Ascending aorta (tissue), 2 donors: ENCODE measurements at regions of chr12 and their contacts with region 1.

Region 1: GRCh38 chr12:124518051-124518932 is 49.1 kb downstream of the NCOR2 start:
- DNase-seq: peak; percentile 94 to 100
- H3K4me3 ChIP-seq: peak overlapping the region; percentile 54 to 67
- H3K27ac ChIP-seq: peak overlapping the region; percentile 91 to 97
- H3K4me1 ChIP-seq: peaks cover 39 to 71% of the 10 kb centered on the region in 2 donors
- H3K27me3 ChIP-seq: no peaks in the 10 kb centered on the region
- CTCF ChIP-seq: no peak

Region 2: GRCh38 chr12:124466216-124467128 is 51.8 kb before region 1 on chr12:
- intact Hi-C with region 1: no loop called
- DNase-seq: peak; percentile 44 to 77
- H3K4me3 ChIP-seq: no peak overlapping the region
- H3K27ac ChIP-seq: no peak overlapping the region
- H3K4me1 ChIP-seq: no peaks in the 10 kb centered on the region
- H3K27me3 ChIP-seq: no peaks in the 10 kb centered on the region
- CTCF ChIP-seq: peak in 1 of 3 experiments; percentile 16

Region 3: GRCh38 chr12:124497658-124498057 is 20.6 kb before region 1 on chr12:
- intact Hi-C with region 1: loop called (anchors 2 kb)
- DNase-seq: peak in 1 of 2 donors; percentile 89
- H3K4me3 ChIP-seq: no peak overlapping the region
- H3K27ac ChIP-seq: peak overlapping the region; percentile 68 to 74
- H3K4me1 ChIP-seq: peaks cover 26 to 41% of the 10 kb centered on the region in 2 donors
- H3K27me3 ChIP-seq: no peaks in the 10 kb centered on the region
- CTCF ChIP-seq: no peak

Region 4: DNA sequence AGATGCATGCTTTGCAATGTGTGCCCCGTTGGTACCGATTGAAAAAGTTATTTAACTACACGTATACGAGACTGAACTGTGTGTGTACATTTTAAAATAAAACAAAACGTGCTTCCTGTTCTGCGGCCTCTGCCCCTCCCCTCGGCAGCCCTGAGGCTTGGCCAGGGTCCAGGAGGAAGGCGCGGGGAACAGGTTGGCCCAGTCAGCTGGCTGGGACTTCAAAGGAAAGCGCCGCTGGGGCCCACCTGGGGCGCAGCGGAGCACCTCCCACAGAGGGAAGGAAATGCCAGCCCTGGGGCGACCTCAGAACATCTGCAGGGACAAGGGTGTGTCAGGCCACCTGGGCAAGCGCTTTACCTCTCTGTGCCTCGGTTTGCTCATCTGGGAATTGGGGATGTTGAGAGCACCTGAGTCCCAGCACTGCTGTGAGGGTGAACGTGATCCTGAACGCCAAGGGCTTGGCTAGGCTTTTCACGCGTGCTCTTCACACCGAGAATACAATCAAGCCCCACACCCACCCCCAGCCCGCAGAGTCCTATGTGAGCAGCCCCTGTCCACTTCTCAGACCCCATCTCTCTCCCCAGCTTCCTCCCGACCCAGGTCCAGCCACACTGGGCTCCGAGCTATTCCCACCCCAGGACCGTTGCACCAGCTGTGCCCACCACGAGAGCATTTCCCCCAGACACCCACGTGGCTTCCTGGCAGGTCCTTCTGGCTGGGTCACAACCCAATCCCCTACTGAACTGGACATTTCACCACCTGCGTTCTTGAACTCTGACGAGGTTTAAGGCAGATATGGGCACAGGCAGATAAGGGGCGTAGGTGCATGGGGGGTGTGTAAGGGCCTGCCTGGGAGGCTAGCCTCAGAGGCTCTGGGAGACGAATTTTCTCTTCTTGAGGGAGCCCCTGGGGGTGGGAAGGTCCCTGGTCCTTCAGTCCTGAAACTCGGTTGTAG is 91.0 kb after region 1 on chr12:
- intact Hi-C with region 1: no loop called
- DNase-seq: peak in 1 of 2 donors; percentile 78
- H3K4me3 ChIP-seq: no peak overlapping the region
- H3K27ac ChIP-seq: no peak overlapping the region
- H3K4me1 ChIP-seq: peaks cover 0 to 6% of the 10 kb centered on the region in 2 donors
- H3K27me3 ChIP-seq: no peaks in the 10 kb centered on the region
- CTCF ChIP-seq: no peak

Region 5: DNA sequence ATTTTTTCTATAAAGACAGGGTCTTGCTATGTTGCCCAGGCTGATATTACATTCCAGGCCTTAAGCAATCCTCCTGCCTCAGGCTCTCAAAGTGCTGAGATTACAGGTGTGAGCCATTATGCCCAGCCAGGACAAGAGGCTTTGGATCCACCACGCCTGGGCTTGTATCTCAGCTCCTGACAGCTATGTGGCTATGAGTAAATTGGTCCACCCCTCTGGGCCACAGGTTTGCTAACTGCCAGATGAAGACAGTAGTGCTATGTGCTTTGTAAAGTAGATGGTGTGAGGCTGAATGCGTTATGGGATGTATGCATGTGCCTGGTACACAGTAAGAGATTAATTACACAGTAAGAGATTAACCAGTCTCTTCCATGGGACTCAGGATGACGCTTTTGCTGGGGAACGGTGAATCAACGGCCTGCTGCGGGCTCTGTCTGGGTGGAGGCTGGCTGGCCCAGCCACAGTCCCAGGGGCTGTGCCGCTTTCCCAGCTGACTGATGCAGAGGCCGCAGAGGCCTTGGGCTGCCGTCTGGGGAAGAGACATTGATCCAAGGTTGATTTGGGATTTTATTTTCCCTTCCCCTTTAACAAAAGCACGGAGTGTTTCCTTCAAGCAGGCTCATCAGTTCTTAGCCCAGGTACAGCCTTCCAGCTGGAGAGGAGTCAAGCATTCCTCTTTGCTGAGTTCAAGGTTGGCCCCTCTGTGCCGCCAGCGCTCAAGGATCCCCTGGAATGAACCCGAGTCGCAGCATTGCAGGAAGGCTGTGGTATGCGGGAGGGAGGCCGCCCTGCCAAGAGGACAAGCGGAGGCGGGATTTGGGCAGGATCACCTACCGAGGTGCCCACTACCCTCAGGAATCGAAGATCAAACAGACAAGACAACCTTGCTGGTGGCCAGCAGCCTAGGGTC is 102.7 kb after region 1 on chr12:
- intact Hi-C with region 1: loop called (anchors 2 kb)
- DNase-seq: peak; percentile 41 to 93
- H3K4me3 ChIP-seq: no peak overlapping the region
- H3K27ac ChIP-seq: peak overlapping the region; percentile 50 to 62
- H3K4me1 ChIP-seq: peaks cover 6 to 23% of the 10 kb centered on the region in 2 donors
- H3K27me3 ChIP-seq: no peaks in the 10 kb centered on the region
- CTCF ChIP-seq: no peak

Region 6: DNA sequence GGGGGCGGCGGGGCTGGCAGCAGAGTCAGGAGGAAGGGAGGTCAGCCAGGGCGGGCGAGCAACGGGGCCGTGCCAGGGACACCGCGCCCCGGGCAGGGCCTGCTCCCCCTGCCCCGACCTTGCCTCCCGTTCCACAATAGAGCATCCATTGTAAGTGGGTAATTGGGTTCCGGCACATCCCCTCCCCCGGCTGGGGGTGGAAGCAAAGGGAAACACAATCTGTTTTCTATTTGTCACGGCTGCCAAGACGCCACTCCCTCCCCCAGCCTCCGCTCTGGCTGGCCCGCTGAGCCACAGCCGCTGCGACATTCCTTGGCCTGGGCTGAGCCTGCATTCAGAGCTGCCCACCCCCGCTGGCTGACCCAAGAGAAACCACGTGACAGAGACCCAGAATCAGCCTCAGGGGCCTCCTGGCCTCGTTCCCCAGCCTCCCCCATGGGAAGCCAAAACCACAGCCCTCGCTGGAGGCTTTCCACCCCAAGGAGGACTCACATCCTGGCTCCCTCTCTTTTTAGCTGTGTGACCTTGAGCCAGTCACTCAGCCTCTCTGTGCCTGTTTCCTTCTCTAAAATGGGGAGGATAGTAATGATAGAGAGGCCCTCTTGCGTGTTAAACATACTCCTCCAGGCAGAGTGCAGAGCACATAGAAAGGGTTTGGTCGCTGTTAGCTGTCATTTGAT is 227.7 kb after region 1 on chr12:
- intact Hi-C with region 1: loop called (anchors 5 kb)
- DNase-seq: peak; percentile 77 to 98
- H3K4me3 ChIP-seq: peak overlapping the region in 1 of 2 donors; percentile 2
- H3K27ac ChIP-seq: peak overlapping the region; percentile 83 to 89
- H3K4me1 ChIP-seq: peaks cover 8 to 12% of the 10 kb centered on the region in 2 donors
- H3K27me3 ChIP-seq: no peaks in the 10 kb centered on the region
- CTCF ChIP-seq: no peak